PC-3 (cell line): ENCODE measurements at regions of chr20 and their contacts with region 1.

Region 1: DNA sequence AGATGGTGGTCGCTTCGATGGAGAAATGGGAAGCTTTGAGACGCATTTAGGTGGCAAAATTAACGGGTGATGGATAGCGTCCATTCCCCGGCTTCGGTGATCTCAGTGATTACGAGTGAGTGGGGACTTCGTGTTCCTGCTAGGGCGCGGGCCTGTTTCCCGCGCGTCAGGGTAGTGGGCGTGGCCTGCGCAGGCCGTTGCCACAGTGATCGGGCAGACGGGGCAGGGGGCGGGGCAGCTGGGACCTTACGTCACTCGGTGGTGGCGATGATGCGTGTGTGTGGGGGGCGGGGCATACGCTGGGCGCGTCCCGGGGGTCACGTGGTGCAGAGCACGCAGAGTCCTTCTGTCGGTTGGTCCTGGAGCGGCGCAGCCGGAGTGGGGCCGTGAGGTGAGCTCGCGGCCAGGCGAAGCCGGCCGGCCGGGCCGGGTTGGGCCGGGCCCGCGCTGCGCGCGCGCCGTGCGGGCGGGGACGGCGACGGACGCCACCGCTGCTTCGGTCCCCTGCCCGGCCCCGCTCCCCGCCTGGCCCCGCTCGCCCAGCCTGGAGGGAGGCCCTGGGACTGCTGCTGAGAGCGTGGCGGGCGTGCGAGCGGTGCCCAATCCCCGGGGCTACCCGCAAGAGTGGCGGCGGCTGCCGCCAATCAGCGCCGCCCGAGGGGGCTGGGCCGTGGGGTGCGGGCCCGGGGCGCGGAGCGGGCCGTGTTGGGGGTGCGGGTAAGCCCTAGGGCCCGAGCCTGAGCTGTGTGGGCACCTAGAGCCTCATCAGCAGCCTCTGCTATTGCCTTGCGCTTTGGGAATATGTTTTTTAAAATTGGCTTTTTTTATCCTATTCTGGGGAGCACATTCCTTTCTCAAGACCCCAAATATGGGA is at the start of gene PHF20:
- DNase-seq: peak; percentile 93
- ATAC-seq: peak; percentile 93
- H3K4me3 ChIP-seq: peak within 1 kb of the TSS; percentile 88
- H3K27ac ChIP-seq: no peak within 1 kb of the TSS; the same call in 1 of the 2 replicates
- H3K4me1 ChIP-seq: peaks cover 33% of the 10 kb centered on the region
- H3K27me3 ChIP-seq: no peaks in the 10 kb centered on the region
- CTCF ChIP-seq: no peak
- total RNA-seq, gene PHF20: 37.2 and 56.3 TPM in 2 replicates

Region 2: GRCh38 chr20:35561268-35561667 is 210.7 kb before region 1 on chr20:
- CTCF ChIA-PET with region 1: no interaction called
- POLR2A ChIA-PET with region 1: no interaction called
- intact Hi-C with region 1: no loop called
- DNase-seq: peak; percentile 63
- ATAC-seq: peak; percentile 89
- H3K4me3 ChIP-seq: no peak overlapping the region
- H3K27ac ChIP-seq: no peak overlapping the region
- H3K4me1 ChIP-seq: peaks cover 15% of the 10 kb centered on the region
- H3K27me3 ChIP-seq: no peaks in the 10 kb centered on the region
- CTCF ChIP-seq: peak; percentile 63

Region 3: DNA sequence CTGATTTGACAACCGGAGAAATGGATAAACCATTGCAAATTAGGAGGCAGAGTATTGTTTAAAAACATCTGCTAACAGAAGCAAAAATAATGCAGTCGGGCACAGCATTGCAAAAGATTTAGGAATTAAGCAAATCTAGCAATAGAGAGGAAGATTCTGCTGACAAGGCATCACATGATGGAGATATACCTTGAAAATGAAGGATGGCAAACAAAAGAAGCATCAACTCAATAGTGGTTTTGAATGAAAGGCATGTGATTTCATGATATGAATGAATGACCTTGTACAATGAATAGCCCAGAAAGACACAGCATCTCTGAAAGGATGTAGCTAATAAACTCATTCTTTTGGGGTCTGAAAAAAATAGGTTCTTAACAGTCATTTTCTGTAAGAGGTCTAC is 21.3 kb before region 1 on chr20:
- CTCF ChIA-PET with region 1: no interaction called
- POLR2A ChIA-PET with region 1: no interaction called
- intact Hi-C with region 1: no loop called
- DNase-seq: no peak
- ATAC-seq: no peak
- H3K4me3 ChIP-seq: no peak overlapping the region
- H3K27ac ChIP-seq: no peak overlapping the region
- H3K4me1 ChIP-seq: no peaks in the 10 kb centered on the region
- H3K27me3 ChIP-seq: no peaks in the 10 kb centered on the region
- CTCF ChIP-seq: no peak

Region 4: GRCh38 chr20:35856866-35857265 is 84.9 kb after region 1 on chr20:
- CTCF ChIA-PET with region 1: no interaction called
- POLR2A ChIA-PET with region 1: interaction called, 18 read pairs
- intact Hi-C with region 1: no loop called
- DNase-seq: no peak
- ATAC-seq: no peak
- H3K4me3 ChIP-seq: no peak overlapping the region
- H3K27ac ChIP-seq: no peak overlapping the region
- H3K4me1 ChIP-seq: no peaks in the 10 kb centered on the region
- H3K27me3 ChIP-seq: no peaks in the 10 kb centered on the region
- CTCF ChIP-seq: no peak